ENCODE measurements at regions of chr16 and their contacts with region 1.

Region 1: GRCh38 chr16:67246934-67247697 is at the start of gene FHOD1:
- DNase-seq: peak; percentile 100
- H3K4me3 Mint-ChIP-seq: peak within 1 kb of the TSS; percentile 89
- H3K27ac Mint-ChIP-seq: peak within 1 kb of the TSS; percentile 91
- H3K4me1 Mint-ChIP-seq: peaks cover 49% of the 10 kb centered on the region
- H3K27me3 Mint-ChIP-seq: peaks cover 14% of the 10 kb centered on the region
- total RNA-seq, gene FHOD1: 128 TPM in 2 replicates

Region 2: GRCh38 chr16:66065925-66066324 is 1181.2 kb before region 1 on chr16:
- intact Hi-C with region 1: no loop called
- DNase-seq: no peak
- H3K4me3 Mint-ChIP-seq: no peak overlapping the region
- H3K27ac Mint-ChIP-seq: no peak overlapping the region
- H3K4me1 Mint-ChIP-seq: no peaks in the 10 kb centered on the region
- H3K27me3 Mint-ChIP-seq: peaks cover 3% of the 10 kb centered on the region

Region 3: GRCh38 chr16:66984892-66985311 is 262.2 kb before region 1 on chr16:
- intact Hi-C with region 1: loop called (anchors 1 kb)
- DNase-seq: peak; percentile 86
- H3K4me3 Mint-ChIP-seq: peak overlapping the region; percentile 61
- H3K27ac Mint-ChIP-seq: peak overlapping the region; percentile 97
- H3K4me1 Mint-ChIP-seq: peaks cover 57% of the 10 kb centered on the region
- H3K27me3 Mint-ChIP-seq: no peaks in the 10 kb centered on the region

Region 4: DNA sequence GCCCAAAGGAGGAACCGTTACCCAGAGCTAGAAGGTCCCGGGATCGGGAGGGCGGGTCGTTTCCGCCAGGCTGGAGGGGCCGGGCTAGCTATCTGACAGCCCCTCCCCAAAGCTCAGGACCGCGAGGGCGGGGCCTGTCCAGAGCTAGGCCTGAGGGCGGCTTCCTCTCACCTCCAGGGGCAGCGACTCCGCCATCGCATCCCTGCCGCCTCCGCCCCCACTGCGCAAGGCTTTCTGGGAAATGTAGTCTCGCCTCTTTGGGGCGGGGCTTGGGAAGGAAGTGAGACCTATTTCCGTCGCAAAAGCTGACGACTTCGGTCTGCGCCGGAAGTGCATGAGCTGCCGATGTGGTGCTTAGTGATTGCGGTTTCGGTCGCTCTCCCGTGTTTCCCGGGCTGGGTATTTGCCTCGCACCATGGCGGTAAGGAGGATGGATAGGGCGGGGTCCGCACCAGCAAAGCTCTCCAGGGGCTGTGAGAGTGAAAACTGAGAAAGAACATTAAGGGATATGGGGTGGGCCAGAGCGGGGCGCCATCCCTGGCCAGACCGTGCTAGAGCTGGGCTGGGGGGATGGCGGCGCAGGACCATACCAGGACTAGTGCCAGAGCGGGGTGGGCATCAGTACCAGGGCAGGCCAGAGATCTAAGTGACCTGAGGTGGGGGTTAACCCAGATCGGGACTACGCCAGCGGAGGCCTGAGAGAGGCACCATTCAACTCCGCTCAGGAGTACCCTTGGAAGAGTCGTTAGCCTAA is 20.1 kb before region 1 on chr16 and contains the start of gene TMEM208:
- intact Hi-C with region 1: loop called (anchors 1 kb)
- DNase-seq: peak; percentile 100
- H3K4me3 Mint-ChIP-seq: peak within 1 kb of the TSS; percentile 98
- H3K27ac Mint-ChIP-seq: peak within 1 kb of the TSS; percentile 98
- H3K4me1 Mint-ChIP-seq: peaks cover 43% of the 10 kb centered on the region
- H3K27me3 Mint-ChIP-seq: no peaks in the 10 kb centered on the region
- total RNA-seq, gene TMEM208: 65.0 and 65.6 TPM in 2 replicates

Region 5: GRCh38 chr16:67279296-67280089 is 32.4 kb after region 1 on chr16 and contains the start of gene PLEKHG4:
- intact Hi-C with region 1: loop called (anchors 2 kb)
- DNase-seq: peak; percentile 95
- H3K4me3 Mint-ChIP-seq: peak within 1 kb of the TSS; percentile 89
- H3K27ac Mint-ChIP-seq: peak within 1 kb of the TSS; percentile 90
- H3K4me1 Mint-ChIP-seq: peaks cover 18% of the 10 kb centered on the region
- H3K27me3 Mint-ChIP-seq: no peaks in the 10 kb centered on the region
- total RNA-seq, gene PLEKHG4: 43.4 and 43.8 TPM in 2 replicates

Region 6: DNA sequence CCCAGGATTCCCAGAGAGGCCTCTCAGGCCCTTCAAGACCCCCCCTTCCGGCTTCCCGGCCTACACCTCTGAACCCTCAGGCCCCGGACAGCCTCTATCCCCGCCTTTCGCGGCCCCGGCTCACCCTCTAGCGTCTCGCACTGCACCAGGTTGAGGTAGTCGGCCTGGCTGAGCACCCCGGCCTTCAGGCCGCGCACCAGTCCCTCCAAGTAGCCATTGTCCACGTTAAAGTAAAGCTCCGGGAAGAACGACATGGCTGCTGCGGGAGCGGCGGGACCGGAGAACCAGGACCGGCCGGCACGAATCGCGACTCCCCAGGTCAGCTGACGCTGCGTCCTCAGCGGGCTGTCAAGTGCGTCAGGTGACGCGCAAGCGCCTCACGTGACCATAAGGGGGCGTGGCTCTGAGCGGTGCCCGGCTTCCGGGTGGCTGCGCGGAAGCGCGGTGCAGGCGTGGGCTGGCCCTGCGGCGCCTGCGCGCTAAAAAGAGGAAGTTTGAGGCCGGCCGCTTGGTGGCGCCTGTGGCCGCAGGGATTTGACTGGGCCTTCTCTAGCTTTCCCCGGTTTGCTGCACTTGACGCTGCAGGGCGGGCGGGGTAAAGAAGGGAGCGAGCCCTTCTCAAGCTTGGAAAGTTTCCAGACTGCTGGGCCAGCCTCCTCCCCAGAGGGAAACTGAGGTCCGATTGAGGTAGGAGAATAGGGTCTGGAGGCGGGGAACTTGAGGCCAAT is 233.9 kb after region 1 on chr16 and contains the start of gene ATP6V0D1:
- intact Hi-C with region 1: loop called (anchors 1 kb)
- DNase-seq: peak; percentile 100
- H3K4me3 Mint-ChIP-seq: peak within 1 kb of the TSS; percentile 100
- H3K27ac Mint-ChIP-seq: peak within 1 kb of the TSS; percentile 97
- H3K4me1 Mint-ChIP-seq: peaks cover 17% of the 10 kb centered on the region
- H3K27me3 Mint-ChIP-seq: no peaks in the 10 kb centered on the region
- total RNA-seq, gene ATP6V0D1: 30.9 and 31.8 TPM in 2 replicates